ENCODE measurements at regions of chr6 and their contacts with region 1.

Region 1: DNA sequence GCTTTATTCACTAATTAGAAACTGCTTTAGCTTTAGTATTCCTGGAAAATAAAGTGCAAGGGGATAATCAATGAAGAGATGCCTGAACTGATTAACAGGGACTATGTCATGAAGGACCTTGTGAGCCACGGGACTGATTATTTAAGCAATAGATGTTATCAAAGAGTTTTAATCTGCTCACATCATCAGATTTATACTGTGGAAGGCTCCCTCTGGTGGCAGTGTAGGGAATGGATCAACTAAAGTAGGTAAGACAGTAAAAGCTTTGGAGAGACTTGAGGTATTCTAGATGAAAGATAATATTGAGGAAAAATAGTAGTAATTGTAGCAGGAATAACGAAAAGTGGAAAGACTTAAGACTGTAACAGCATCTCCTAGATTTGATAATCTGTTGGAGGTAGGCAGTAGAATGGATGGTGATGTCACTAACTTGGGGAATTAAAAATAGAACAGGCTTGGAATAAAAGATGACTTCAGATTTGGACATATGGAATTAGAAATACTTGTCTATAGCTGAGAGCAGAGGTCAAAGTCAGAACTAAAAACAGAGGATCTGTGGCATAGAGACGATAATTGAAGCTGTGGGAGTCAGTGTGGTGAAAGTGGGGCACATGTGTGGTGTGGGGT is 80.3 kb upstream of the HTR1E start:
- DNase-seq: peak; percentile 58
- H3K4me3 ChIP-seq: no peak overlapping the region
- H3K27ac ChIP-seq: no peak overlapping the region
- H3K4me1 ChIP-seq: no peaks in the 10 kb centered on the region
- CTCF ChIP-seq: peak; percentile 94

Region 2: DNA sequence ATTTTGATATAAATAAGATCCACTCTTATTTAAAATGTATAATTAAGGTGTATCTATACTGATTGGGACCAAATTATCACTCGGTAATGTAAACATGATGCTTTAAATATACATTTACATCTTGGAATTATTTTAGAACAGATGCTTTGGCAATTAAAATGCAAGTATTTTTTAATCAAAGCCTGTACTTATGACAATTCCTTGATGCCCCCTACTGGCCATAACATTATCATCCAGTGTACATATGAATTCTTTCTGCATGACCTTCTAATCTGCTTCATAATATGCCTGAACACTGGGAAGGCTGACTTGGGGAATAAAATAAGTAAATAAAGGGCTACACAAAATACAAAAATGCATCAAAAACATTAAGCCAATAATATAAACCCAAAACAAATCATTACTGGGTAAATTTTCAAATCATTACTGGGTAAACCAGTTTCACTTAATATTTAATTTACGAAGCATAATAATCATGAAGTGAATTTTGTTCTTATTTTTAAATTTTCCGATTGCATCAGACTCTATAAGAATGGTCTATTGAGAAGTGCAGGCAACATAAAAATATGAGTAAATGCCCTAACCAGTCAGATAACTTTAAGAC is 172.8 kb after region 1 on chr6:
- CTCF ChIA-PET with region 1: no interaction called
- POLR2A ChIA-PET with region 1: no interaction called
- intact Hi-C with region 1: loop called (anchors 10 kb)
- DNase-seq: peak; percentile 62
- H3K4me3 ChIP-seq: no peak overlapping the region
- H3K27ac ChIP-seq: no peak overlapping the region
- H3K4me1 ChIP-seq: no peaks in the 10 kb centered on the region
- CTCF ChIP-seq: peak; percentile 92

Region 3: DNA sequence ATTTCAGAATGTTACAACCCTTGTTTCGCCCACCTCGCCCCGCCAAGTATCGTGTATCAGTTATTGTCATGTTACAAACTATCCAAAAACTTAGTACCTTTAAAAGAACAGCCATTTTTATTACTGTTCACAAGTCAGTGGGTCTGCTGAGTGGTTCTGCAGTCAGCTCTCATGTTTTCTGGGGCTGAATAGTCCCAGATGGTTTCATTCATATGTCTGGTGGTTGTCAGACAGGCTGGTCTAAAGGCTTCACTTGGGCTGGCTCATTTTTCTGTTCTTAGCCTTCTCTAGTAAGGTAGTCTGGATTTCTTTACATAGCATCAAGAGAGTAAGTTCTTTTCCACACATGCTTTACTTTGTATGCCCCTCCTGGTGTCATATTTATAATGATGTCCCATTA is 307.0 kb after region 1 on chr6:
- CTCF ChIA-PET with region 1: no interaction called
- POLR2A ChIA-PET with region 1: no interaction called
- intact Hi-C with region 1: no loop called
- DNase-seq: no peak
- H3K4me3 ChIP-seq: no peak overlapping the region
- H3K27ac ChIP-seq: no peak overlapping the region
- H3K4me1 ChIP-seq: peaks cover 8% of the 10 kb centered on the region
- CTCF ChIP-seq: no peak